ENCODE measurements at regions of chr7 and their contacts with region 1.

Region 1: GRCh38 chr7:141654551-141654950 is 47.4 kb downstream of the DENND11 start:
- DNase-seq: peak; percentile 87
- H3K4me3 ChIP-seq: no peak overlapping the region; a peak in 1 of 4 replicates
- H3K27ac ChIP-seq: peak overlapping the region; percentile 12 to 64; a peak in 3 of 4 replicates
- H3K4me1 ChIP-seq: peaks cover 0 to 11% of the 10 kb centered on the region in 2 experiments; a peak in 2 of 4 replicates
- H3K27me3 ChIP-seq: no peaks in the 10 kb centered on the region
- CTCF ChIP-seq: peak; percentile 94
- EP300 ChIP-seq: peak in 1 of 2 experiments; percentile 13; a peak in 1 of 4 replicates
- RAD21 ChIP-seq: peak; percentile 91

Region 2: GRCh38 chr7:141072548-141073172 is 581.9 kb before region 1 on chr7:
- CTCF ChIA-PET with region 1: interaction called, 31 read pairs
- POLR2A ChIA-PET with region 1: interaction called, 4 read pairs
- DNase-seq: peak; percentile 84
- H3K4me3 ChIP-seq: peak overlapping the region; percentile 63 to 64
- H3K27ac ChIP-seq: peak overlapping the region in 1 of 2 experiments; percentile 67; a peak in 1 of 4 replicates
- H3K4me1 ChIP-seq: peaks cover 4 to 28% of the 10 kb centered on the region in 2 experiments; a peak in 2 of 4 replicates
- H3K27me3 ChIP-seq: peaks cover 38% of the 10 kb centered on the region
- CTCF ChIP-seq: no peak
- EP300 ChIP-seq: no peak
- RAD21 ChIP-seq: peak; percentile 13; the same call in 1 of the 2 replicates

Region 3: GRCh38 chr7:141533149-141533949 is 121.2 kb before region 1 on chr7:
- CTCF ChIA-PET with region 1: interaction called, 45 read pairs
- POLR2A ChIA-PET with region 1: no interaction called
- DNase-seq: peak; percentile 77
- H3K4me3 ChIP-seq: no peak overlapping the region; a peak in 1 of 4 replicates
- H3K27ac ChIP-seq: no peak overlapping the region
- H3K4me1 ChIP-seq: peaks cover 0 to 2% of the 10 kb centered on the region in 2 experiments; a peak in 1 of 4 replicates
- H3K27me3 ChIP-seq: no peaks in the 10 kb centered on the region; the same call in 1 of the 2 replicates
- CTCF ChIP-seq: peak; percentile 100
- EP300 ChIP-seq: no peak
- RAD21 ChIP-seq: peak; percentile 98

Region 4: GRCh38 chr7:141641876-141642275 is 12.7 kb before region 1 on chr7:
- CTCF ChIA-PET with region 1: interaction called, 28 read pairs
- POLR2A ChIA-PET with region 1: no interaction called
- DNase-seq: no peak
- H3K4me3 ChIP-seq: no peak overlapping the region
- H3K27ac ChIP-seq: no peak overlapping the region
- H3K4me1 ChIP-seq: no peaks in the 10 kb centered on the region; a peak in 1 of 4 replicates
- H3K27me3 ChIP-seq: no peaks in the 10 kb centered on the region
- CTCF ChIP-seq: no peak
- EP300 ChIP-seq: no peak
- RAD21 ChIP-seq: no peak

Region 5: DNA sequence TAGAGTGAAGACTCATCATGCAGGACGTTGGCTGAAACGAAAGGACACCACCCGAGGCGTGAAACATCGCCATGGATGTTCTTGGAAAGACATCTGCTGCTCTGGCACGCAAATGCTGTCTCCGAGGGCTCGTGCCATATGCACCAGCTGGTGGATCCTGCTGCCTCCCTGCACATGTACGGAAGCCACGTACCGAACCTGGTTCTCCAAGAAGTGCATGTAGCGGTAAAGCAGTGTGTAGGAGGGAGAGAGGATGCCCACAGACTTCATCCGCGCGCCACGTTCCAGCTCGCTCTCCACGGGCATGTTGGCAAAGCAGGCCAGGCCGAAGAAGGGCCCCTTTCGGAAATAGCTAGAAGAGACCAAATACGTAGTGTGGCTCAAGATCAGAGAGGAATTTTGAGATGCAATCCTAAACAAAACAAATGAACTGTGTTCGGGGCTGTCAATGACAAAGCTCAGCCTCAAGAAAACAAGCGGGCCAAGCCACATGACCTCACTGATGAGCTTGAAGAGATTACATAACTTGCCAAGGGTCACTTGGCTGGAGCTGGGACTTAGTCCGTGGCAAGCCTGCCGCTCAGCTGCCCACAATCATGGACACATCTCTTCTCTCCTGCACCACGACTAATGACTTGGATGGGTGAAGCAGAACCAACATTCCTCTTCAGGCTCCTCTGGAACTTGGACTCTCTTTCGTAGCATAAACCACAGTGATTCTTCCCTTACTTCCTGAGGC is 30.9 kb after region 1 on chr7:
- CTCF ChIA-PET with region 1: interaction called, 15 read pairs
- POLR2A ChIA-PET with region 1: no interaction called
- DNase-seq: no peak
- H3K4me3 ChIP-seq: no peak overlapping the region
- H3K27ac ChIP-seq: no peak overlapping the region
- H3K4me1 ChIP-seq: no peaks in the 10 kb centered on the region
- H3K27me3 ChIP-seq: no peaks in the 10 kb centered on the region
- CTCF ChIP-seq: no peak
- EP300 ChIP-seq: no peak
- RAD21 ChIP-seq: no peak

Region 6: DNA sequence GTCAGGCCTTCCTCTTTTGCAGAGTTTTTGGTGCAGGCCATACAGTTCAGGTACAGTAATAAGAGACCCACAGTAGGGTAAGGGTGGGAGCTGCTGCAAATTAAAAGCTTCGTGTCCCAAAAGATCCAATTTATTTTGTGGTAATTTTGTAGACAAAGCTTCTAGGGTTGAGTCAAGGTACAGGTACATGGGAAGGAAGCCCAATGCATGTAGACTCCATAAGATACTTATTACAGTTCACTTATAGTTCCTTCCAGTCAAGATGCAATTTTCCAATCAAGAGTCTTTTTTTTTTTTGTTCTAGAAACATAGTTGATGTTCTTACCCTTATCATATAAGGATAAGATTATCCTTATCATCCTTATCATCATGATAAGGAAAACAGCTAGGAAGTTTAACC is 121.8 kb after region 1 on chr7 and contains the start of gene TAS2R4:
- CTCF ChIA-PET with region 1: interaction called, 10 read pairs
- POLR2A ChIA-PET with region 1: no interaction called
- DNase-seq: no peak
- H3K4me3 ChIP-seq: no peak within 1 kb of the TSS
- H3K27ac ChIP-seq: no peak within 1 kb of the TSS
- H3K4me1 ChIP-seq: no peaks in the 10 kb centered on the region
- H3K27me3 ChIP-seq: no peaks in the 10 kb centered on the region
- CTCF ChIP-seq: no peak
- EP300 ChIP-seq: no peak
- RAD21 ChIP-seq: no peak
- polyA plus RNA-seq, gene TAS2R4: 0.18 and 0.19 TPM in 2 replicates

Region 7: DNA sequence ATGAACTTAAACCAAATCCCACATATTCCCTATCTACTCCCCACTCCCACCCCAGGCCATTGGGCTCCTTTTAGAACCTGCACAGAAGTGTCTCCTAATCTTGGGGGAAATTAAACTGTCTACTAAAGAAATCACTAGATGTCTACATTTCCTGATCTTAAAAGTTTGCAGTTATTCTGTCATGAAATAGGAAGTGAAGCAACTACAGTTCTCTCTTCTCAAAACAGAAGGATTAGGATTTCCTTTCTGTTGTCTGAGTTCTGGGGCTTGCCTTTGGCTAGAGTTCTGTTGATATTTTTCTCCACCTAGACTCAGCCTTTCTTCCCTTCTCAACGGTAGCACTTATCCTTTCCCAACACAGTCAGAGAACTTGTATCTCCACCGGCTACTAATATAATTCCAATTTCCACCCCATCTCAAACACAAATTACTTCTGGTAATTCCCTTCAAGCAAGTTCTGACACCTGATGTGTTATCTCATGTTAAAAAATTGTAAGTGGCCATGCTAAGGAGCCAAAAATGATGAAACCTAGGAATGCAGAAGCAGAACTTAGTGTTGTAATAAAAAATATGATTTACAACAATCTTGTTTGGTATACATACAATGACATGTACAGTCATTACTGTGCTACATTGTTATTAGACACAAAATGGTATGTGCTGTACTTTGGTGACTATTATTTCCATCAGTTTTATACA is 273.7 kb after region 1 on chr7:
- CTCF ChIA-PET with region 1: no interaction called
- POLR2A ChIA-PET with region 1: no interaction called
- DNase-seq: no peak
- H3K4me3 ChIP-seq: no peak overlapping the region
- H3K27ac ChIP-seq: no peak overlapping the region
- H3K4me1 ChIP-seq: no peaks in the 10 kb centered on the region
- H3K27me3 ChIP-seq: no peaks in the 10 kb centered on the region
- CTCF ChIP-seq: no peak
- EP300 ChIP-seq: no peak
- RAD21 ChIP-seq: no peak

Region 8: DNA sequence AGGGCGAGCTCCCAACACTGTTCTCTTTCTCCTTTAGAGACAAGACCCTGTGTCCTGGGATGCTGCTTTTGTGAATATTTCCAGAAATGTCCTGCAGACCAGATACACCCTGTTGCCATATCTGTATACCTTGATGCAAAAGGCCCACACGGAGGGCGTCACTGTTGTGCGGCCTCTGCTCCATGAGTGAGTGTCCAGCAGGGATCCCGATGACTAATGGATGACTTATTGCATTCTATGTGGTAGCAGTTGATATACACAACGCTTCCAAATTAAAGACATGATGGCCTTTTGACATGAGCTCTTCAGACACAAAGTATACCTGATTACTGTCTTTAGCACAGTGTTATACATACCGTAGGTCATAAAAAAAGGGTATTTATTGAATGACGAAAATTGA is 412.0 kb after region 1 on chr7:
- CTCF ChIA-PET with region 1: no interaction called
- POLR2A ChIA-PET with region 1: no interaction called
- DNase-seq: no peak
- H3K4me3 ChIP-seq: no peak overlapping the region
- H3K27ac ChIP-seq: no peak overlapping the region
- H3K4me1 ChIP-seq: no peaks in the 10 kb centered on the region
- H3K27me3 ChIP-seq: no peaks in the 10 kb centered on the region; the same call in 1 of the 2 replicates
- CTCF ChIP-seq: no peak
- EP300 ChIP-seq: no peak
- RAD21 ChIP-seq: no peak

Measured in SK-N-SH (cell line).